Right ventricle myocardium inferior (tissue), 1 donor: ENCODE measurements at regions of chr10 and their contacts with region 1.

Region 1: GRCh38 chr10:44828508-44829142 is 82.5 kb upstream of the TMEM72 start:
- DNase-seq: peak; percentile 74
- ATAC-seq: peak; percentile 85

Region 2: DNA sequence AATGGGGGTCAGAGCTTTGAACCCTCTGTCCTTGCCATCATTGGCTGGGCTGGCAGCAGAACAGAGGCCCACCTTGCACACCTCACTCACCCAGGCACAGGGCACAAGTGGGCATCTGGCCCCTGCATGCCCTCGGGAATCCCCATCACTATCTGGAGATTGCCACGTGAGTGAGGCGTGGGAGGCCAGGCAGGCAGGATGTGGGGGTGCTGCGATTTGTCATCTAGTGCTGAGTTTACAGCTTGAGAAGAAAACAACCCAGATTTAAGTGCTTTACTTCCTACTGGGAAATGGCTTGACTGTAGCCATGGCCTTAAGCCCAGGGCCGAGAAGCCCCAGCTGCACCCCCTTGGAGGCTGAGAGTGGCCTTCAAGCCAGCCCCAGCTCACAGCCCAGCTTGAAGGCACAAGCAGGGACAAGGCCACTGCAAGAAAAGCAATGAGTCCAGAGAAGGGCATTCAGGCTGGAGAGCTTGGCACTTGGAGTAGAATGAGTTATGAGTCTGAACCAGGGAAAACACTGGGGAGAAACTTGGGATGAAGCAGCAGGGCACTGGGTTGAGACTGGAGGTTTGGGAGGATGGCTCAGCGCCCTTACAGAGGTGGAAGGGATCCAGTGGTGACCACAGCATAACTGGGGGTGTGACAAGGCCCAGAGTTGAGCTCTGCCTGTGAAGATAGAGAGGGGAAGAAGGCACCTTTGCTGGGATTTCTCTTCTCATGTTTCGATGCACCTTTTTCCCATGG is 566.7 kb before region 1 on chr10:
- intact Hi-C with region 1: no loop called
- DNase-seq: peak; percentile 69
- ATAC-seq: peak; percentile 48

Region 3: DNA sequence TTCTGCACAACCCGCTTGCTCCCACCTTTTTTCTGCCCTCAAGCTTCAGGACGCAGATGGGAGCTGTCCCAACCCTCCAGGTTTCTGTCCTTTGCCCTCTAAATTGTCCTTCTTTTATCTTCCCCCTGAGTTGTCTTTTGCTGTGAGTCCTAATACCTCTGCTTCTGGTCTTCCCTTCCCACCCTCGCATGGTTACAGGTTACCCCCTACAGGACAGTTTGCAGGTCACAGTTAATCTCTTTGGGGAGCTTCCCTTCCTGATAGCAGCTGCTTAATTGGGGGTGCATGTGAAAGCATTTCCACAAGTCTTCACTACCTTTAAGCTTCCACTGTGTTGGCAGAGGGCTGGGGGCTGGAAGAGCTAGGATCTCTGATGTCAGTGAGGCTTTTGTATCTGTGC is 322.2 kb before region 1 on chr10:
- intact Hi-C with region 1: no loop called
- DNase-seq: no peak
- ATAC-seq: no peak

Region 4: GRCh38 chr10:44689368-44689767 is 139.3 kb before region 1 on chr10:
- intact Hi-C with region 1: loop called (anchors 10 kb)
- DNase-seq: no peak
- ATAC-seq: no peak